ENCODE measurements at regions of chrX and their contacts with region 1.

Region 1: GRCh38 chrX:131626681-131627296 is 82.9 kb downstream of the OR13H1 start:
- DNase-seq: peak; percentile 15 to 48
- ATAC-seq: peak; percentile 50 to 70; a peak in 3 of 6 replicates
- H3K4me3 ChIP-seq: no peak overlapping the region
- H3K27ac ChIP-seq: no peak overlapping the region
- H3K4me1 ChIP-seq: no peaks in the 10 kb centered on the region
- CTCF ChIP-seq: peak; percentile 69
- EP300 ChIP-seq: no peak
- POLR2A ChIP-seq: no peak
- RAD21 ChIP-seq: peak; percentile 82 to 86

Region 2: GRCh38 chrX:130994671-130995070 is 632.1 kb before region 1 on chrX:
- CTCF ChIA-PET with region 1: interaction called, 10 read pairs
- POLR2A ChIA-PET with region 1: no interaction called
- DNase-seq: peak; percentile 16 to 21
- ATAC-seq: peak in 1 of 2 experiments; percentile 53; a peak in 2 of 6 replicates
- H3K4me3 ChIP-seq: no peak overlapping the region
- H3K27ac ChIP-seq: no peak overlapping the region
- H3K4me1 ChIP-seq: no peaks in the 10 kb centered on the region
- CTCF ChIP-seq: peak; percentile 45
- EP300 ChIP-seq: no peak
- POLR2A ChIP-seq: no peak
- RAD21 ChIP-seq: peak; percentile 40 to 44; a peak in 4 of 5 replicates

Region 3: GRCh38 chrX:131262737-131263679 is 363.8 kb before region 1 on chrX:
- CTCF ChIA-PET with region 1: interaction called, 22 read pairs
- POLR2A ChIA-PET with region 1: no interaction called
- DNase-seq: peak; percentile 37 to 51
- ATAC-seq: peak; percentile 85 to 93
- H3K4me3 ChIP-seq: no peak overlapping the region
- H3K27ac ChIP-seq: no peak overlapping the region
- H3K4me1 ChIP-seq: no peaks in the 10 kb centered on the region
- CTCF ChIP-seq: peak; percentile 59
- EP300 ChIP-seq: no peak
- POLR2A ChIP-seq: no peak
- RAD21 ChIP-seq: peak; percentile 64 to 65

Region 4: GRCh38 chrX:131564553-131565244 is 62.1 kb before region 1 on chrX:
- CTCF ChIA-PET with region 1: no interaction called
- POLR2A ChIA-PET with region 1: no interaction called
- DNase-seq: no peak
- ATAC-seq: no peak
- H3K4me3 ChIP-seq: no peak overlapping the region
- H3K27ac ChIP-seq: no peak overlapping the region
- H3K4me1 ChIP-seq: peaks cover 35% of the 10 kb centered on the region
- CTCF ChIP-seq: no peak
- EP300 ChIP-seq: no peak
- POLR2A ChIP-seq: no peak
- RAD21 ChIP-seq: no peak

Region 5: GRCh38 chrX:131646106-131646505 is 19.3 kb after region 1 on chrX:
- CTCF ChIA-PET with region 1: no interaction called
- POLR2A ChIA-PET with region 1: no interaction called
- DNase-seq: no peak
- ATAC-seq: no peak
- H3K4me3 ChIP-seq: no peak overlapping the region
- H3K27ac ChIP-seq: no peak overlapping the region
- H3K4me1 ChIP-seq: no peaks in the 10 kb centered on the region
- CTCF ChIP-seq: no peak
- EP300 ChIP-seq: no peak
- POLR2A ChIP-seq: no peak
- RAD21 ChIP-seq: no peak

Region 6: GRCh38 chrX:132017431-132018185 is 390.8 kb after region 1 on chrX:
- CTCF ChIA-PET with region 1: no interaction called
- POLR2A ChIA-PET with region 1: no interaction called
- DNase-seq: no peak
- ATAC-seq: no peak
- H3K4me3 ChIP-seq: no peak overlapping the region
- H3K27ac ChIP-seq: no peak overlapping the region
- H3K4me1 ChIP-seq: no peaks in the 10 kb centered on the region
- CTCF ChIP-seq: no peak
- EP300 ChIP-seq: no peak
- POLR2A ChIP-seq: no peak
- RAD21 ChIP-seq: no peak